Activated CD4-positive, alpha-beta T cell treated with anti-CD3 and anti-CD28 coated beads, Interleukin-2, amount 10 ng/mL, durations not matched to agents 7 days and 5 days (primary cell): ENCODE measurements at regions of chr3 and their contacts with region 1.

Region 1: GRCh38 chr3:89923921-89924610 is 816.6 kb downstream of the EPHA3 start:
- DNase-seq: no peak
- H3K4me3 Mint-ChIP-seq: no peak overlapping the region
- H3K27ac Mint-ChIP-seq: no peak overlapping the region
- H3K4me1 Mint-ChIP-seq: no peaks in the 10 kb centered on the region
- H3K27me3 Mint-ChIP-seq: no peaks in the 10 kb centered on the region

Region 2: DNA sequence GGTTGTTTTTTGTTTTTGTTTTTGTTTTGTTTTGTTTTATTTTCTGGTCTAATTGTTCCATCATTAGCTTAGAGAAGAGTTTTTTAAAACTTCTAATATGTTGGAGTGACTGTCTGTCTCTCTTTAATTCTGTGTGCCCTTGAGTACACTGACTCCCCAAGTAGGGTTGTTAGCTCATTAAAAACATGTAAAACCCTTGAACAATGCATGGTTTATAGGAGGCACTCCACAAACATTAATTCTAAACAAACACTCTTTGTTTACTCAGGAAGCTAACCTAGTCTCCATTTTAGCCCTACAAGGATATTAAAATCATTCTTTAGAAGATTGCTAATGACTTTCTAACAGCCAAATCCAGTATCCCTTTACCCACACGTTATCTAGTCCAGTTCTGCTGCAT is 1965.8 kb before region 1 on chr3:
- CTCF ChIA-PET with region 1: no interaction called
- POLR2A ChIA-PET with region 1: interaction called, 16 read pairs
- DNase-seq: no peak
- H3K4me3 Mint-ChIP-seq: no peak overlapping the region
- H3K27ac Mint-ChIP-seq: no peak overlapping the region
- H3K4me1 Mint-ChIP-seq: no peaks in the 10 kb centered on the region
- H3K27me3 Mint-ChIP-seq: peaks cover 16% of the 10 kb centered on the region